Activated CD4-positive, alpha-beta T cell treated with anti-CD3 and anti-CD28 coated beads for 36 hours (primary cell): ENCODE measurements at regions of chr6 and their contacts with region 1.

Region 1: DNA sequence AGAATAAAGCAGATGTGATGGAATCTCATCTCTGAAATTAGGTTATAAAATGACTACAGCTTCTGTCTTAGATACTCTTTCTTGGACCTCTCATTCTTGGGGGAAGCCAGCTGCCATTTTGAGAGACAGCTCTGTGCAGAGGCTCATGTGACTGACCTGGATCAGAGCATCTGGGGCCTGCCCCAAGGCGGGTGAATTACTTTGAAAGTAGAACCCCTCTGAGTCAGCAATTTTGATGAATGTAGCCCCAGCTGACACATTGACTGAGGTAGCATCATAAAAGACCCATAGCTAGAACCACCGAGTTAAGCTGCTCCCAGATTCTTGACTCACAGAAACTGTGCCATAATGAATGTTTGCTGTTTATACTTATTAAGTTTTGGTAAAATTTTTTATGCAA is 124.5 kb downstream of the THEMIS start:
- DNase-seq: peak; percentile 52
- ATAC-seq: peak; percentile 84
- H3K4me3 Mint-ChIP-seq: no peak overlapping the region
- H3K27ac Mint-ChIP-seq: peak overlapping the region; percentile 73
- H3K4me1 Mint-ChIP-seq: peaks cover 52% of the 10 kb centered on the region
- H3K27me3 Mint-ChIP-seq: no peaks in the 10 kb centered on the region

Region 2: GRCh38 chr6:127516666-127517273 is 259.6 kb before region 1 on chr6:
- CTCF ChIA-PET with region 1: no interaction called
- POLR2A ChIA-PET with region 1: no interaction called
- intact Hi-C with region 1: no loop called
- DNase-seq: peak; percentile 69
- ATAC-seq: peak; percentile 59
- H3K4me3 Mint-ChIP-seq: peak overlapping the region; percentile 87
- H3K27ac Mint-ChIP-seq: peak overlapping the region; percentile 58
- H3K4me1 Mint-ChIP-seq: peaks cover 40% of the 10 kb centered on the region
- H3K27me3 Mint-ChIP-seq: peaks cover 49% of the 10 kb centered on the region

Region 3: GRCh38 chr6:127762284-127762683 is 14.0 kb before region 1 on chr6:
- CTCF ChIA-PET with region 1: interaction called, 5 read pairs
- POLR2A ChIA-PET with region 1: no interaction called
- intact Hi-C with region 1: loop called in 1 of 2 experiments (anchors 2 kb)
- DNase-seq: peak; percentile 24
- ATAC-seq: peak; percentile 59
- H3K4me3 Mint-ChIP-seq: no peak overlapping the region
- H3K27ac Mint-ChIP-seq: peak overlapping the region; percentile 40
- H3K4me1 Mint-ChIP-seq: peaks cover 57% of the 10 kb centered on the region
- H3K27me3 Mint-ChIP-seq: no peaks in the 10 kb centered on the region

Region 4: GRCh38 chr6:128036808-128037570 is 260.7 kb after region 1 on chr6:
- CTCF ChIA-PET with region 1: no interaction called
- POLR2A ChIA-PET with region 1: no interaction called
- intact Hi-C with region 1: no loop called
- DNase-seq: no peak
- ATAC-seq: no peak
- H3K4me3 Mint-ChIP-seq: no peak overlapping the region
- H3K27ac Mint-ChIP-seq: no peak overlapping the region
- H3K4me1 Mint-ChIP-seq: peaks cover 13% of the 10 kb centered on the region
- H3K27me3 Mint-ChIP-seq: no peaks in the 10 kb centered on the region